Breast epithelium (tissue), 4 donors: ENCODE measurements at regions of chr7 and their contacts with region 1.

Region 1: DNA sequence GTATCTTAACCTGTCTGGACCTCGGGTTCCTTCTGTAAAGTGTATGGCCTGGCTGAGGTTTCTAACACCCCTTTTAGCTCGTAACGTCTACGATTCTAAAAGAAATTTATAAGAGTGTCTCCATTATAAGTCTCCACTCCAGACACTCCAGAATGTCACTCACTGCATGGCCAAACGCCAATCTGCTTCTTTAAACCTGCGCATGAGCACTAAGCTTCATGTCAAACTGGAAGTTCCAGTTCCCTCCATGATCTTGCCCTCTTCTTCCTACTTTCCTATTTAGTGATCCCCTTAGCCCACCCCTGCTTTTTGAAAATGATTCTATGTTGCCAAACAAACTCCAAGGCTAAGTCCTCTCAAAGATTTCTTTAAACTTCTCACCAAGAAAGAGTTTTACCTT is 241.4 kb upstream of the NPVF start:
- DNase-seq: no peak
- H3K4me3 ChIP-seq: no peak overlapping the region
- H3K27ac ChIP-seq: no peak overlapping the region
- H3K4me1 ChIP-seq: no peaks in the 10 kb centered on the region
- H3K27me3 ChIP-seq: no peaks in the 10 kb centered on the region
- CTCF ChIP-seq: no peak
- POLR2A ChIP-seq: no peak

Region 2: DNA sequence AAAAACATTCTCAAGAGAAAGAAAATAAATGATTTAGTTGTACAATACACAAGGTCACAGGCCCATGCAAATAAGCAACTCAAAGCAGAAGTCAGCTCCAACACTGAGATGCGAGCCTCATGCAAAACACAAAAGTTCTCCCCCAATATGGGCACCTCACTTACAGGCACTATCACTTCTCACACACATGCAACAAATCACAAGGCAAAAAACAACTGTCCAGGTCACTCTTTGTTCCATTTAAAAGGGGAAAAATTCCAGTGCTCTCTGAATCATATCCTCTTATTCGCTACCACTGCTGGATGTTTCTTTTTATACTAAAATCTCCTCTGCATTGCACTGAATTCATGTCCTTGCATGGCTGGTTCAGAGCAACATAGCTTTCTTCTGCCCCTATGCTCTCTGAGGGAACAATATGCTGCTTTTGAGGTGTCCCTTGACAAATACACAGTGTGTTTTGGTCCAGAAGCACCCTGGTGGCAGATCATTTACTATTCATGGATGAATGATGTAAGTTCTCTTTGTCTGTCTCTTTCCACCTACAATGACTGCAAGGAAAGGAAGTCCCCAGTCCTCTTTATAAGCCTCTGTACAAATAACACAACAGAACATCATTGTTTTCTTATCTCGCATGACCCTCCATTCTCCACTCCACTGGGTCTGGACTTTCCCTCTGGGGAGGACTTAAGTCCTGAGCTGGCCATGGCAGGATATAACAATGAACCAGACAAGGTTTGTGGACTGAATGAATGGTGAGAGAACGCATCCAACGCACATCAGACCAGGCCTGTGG is 627.0 kb before region 1 on chr7:
- intact Hi-C with region 1: no loop called
- DNase-seq: no peak
- H3K4me3 ChIP-seq: no peak overlapping the region
- H3K27ac ChIP-seq: no peak overlapping the region
- H3K4me1 ChIP-seq: no peaks in the 10 kb centered on the region
- H3K27me3 ChIP-seq: no peaks in the 10 kb centered on the region
- CTCF ChIP-seq: no peak
- POLR2A ChIP-seq: no peak

Region 3: DNA sequence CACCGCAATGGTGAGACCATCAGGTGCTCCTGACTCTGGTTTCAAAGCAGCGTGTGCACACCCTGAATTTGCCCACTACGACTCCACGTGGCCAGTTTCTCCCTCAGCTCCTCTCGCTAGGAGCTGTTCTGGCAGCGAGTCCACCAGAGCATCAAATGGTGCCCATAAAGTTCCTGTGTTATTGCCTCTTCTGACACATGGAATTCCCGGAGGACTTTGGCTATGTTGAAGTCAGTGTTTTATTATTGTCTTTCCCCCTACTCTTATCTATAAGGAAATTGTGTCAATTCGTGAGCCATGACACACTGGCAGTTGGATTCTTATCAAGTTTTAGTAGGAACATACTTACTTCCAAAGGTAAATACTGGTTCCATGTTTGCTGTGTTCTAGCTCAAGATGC is 187.5 kb before region 1 on chr7:
- intact Hi-C with region 1: no loop called
- DNase-seq: no peak
- H3K4me3 ChIP-seq: no peak overlapping the region
- H3K27ac ChIP-seq: no peak overlapping the region
- H3K4me1 ChIP-seq: no peaks in the 10 kb centered on the region
- H3K27me3 ChIP-seq: no peaks in the 10 kb centered on the region
- CTCF ChIP-seq: no peak
- POLR2A ChIP-seq: no peak

Region 4: GRCh38 chr7:25515633-25516275 is 46.1 kb after region 1 on chr7:
- intact Hi-C with region 1: loop called (anchors 5 kb)
- DNase-seq: no peak
- H3K4me3 ChIP-seq: no peak overlapping the region
- H3K27ac ChIP-seq: no peak overlapping the region
- H3K4me1 ChIP-seq: no peaks in the 10 kb centered on the region
- H3K27me3 ChIP-seq: no peaks in the 10 kb centered on the region
- CTCF ChIP-seq: no peak
- POLR2A ChIP-seq: no peak